CD8-positive, alpha-beta T cell (primary cell): ENCODE measurements at regions of chr6 and their contacts with region 1.

Region 1: DNA sequence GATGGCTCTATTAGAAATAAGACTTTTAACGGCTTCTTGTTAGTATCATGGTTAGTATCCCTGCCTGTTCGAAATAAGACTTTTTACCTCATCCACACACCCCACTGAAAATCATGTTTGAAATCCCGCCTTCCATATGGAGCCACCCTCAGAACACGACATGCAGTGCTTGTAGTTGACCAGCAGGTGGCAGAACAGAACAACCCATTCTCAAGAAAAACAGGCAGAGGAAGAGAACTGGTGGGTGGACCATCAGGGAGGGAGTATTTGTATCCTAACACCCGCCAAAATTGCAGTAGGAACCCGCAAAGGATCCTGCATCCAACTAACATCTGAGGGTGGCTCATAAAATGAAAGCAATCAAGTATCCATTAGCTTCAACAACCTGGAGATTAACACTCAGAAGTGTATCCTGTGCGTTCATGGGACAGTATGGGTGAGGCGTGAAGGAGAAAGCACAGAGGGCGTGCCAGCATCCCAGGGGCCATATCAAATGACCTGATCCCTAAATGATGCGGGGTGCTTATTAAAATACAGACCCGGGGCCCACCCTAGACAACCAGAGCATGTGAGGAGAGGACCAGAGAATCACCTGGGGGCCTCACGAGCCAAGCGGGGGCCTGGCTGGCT is 89.6 kb upstream of the NHSL1 start:
- DNase-seq: peak in 8 of 9 experiments; percentile 24 to 74 (median 50)
- ATAC-seq: peak; percentile 67
- H3K4me3 ChIP-seq: no peak overlapping the region
- H3K4me3 Mint-ChIP-seq: no peak overlapping the region
- H3K27ac ChIP-seq: no peak overlapping the region
- H3K27ac Mint-ChIP-seq: no peak overlapping the region
- H3K4me1 ChIP-seq: peaks cover 10% of the 10 kb centered on the region
- H3K4me1 Mint-ChIP-seq: peaks cover 19% of the 10 kb centered on the region
- H3K27me3 ChIP-seq: no peaks in the 10 kb centered on the region
- H3K27me3 Mint-ChIP-seq: no peaks in the 10 kb centered on the region
- CTCF ChIP-seq: peak; percentile 93

Region 2: GRCh38 chr6:138493413-138493812 is 95.5 kb before region 1 on chr6:
- CTCF ChIA-PET with region 1: no interaction called
- POLR2A ChIA-PET with region 1: no interaction called
- intact Hi-C with region 1: no loop called
- DNase-seq: no peak
- ATAC-seq: no peak
- H3K4me3 ChIP-seq: no peak overlapping the region
- H3K4me3 Mint-ChIP-seq: no peak overlapping the region
- H3K27ac ChIP-seq: no peak overlapping the region
- H3K27ac Mint-ChIP-seq: no peak overlapping the region
- H3K4me1 ChIP-seq: no peaks in the 10 kb centered on the region
- H3K4me1 Mint-ChIP-seq: no peaks in the 10 kb centered on the region
- H3K27me3 ChIP-seq: no peaks in the 10 kb centered on the region
- H3K27me3 Mint-ChIP-seq: peaks cover 7% of the 10 kb centered on the region
- CTCF ChIP-seq: no peak

Region 3: DNA sequence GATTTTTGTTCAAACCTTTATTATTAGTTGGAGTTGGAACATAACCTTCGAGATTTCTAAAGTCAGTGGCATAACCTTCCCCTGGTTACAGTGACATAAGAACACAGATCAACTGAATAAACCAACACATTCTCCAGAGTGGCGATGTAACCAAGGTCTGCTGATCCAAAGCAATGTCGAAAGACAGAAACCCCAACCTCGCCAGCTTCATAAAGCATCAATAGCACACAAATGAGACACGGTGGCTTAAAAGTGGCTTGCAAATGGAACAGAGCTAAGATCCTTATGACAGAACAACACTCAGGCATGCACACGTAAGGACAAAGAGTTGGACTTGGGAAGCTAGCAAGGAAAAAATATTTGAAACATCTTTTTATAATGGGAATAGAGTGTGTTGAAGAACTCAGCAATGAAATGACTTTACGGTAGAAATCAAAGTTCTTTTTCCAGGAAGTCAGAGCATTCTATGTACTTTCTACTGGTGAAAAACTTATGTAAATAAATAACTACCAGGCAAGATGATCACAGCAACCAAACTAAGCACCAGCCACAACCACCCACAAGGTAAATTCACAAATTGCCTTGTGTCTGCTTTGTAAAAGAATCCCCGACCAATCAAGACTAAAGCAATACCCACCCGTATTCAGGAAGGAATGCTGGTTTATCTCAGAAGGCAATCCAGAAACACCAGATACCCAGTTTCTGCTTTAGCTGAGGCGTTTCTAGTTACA is 28.6 kb before region 1 on chr6:
- CTCF ChIA-PET with region 1: no interaction called
- POLR2A ChIA-PET with region 1: no interaction called
- intact Hi-C with region 1: no loop called
- DNase-seq: no peak
- ATAC-seq: no peak
- H3K4me3 ChIP-seq: no peak overlapping the region
- H3K4me3 Mint-ChIP-seq: no peak overlapping the region
- H3K27ac ChIP-seq: no peak overlapping the region
- H3K27ac Mint-ChIP-seq: no peak overlapping the region
- H3K4me1 ChIP-seq: no peaks in the 10 kb centered on the region
- H3K4me1 Mint-ChIP-seq: no peaks in the 10 kb centered on the region
- H3K27me3 ChIP-seq: no peaks in the 10 kb centered on the region
- H3K27me3 Mint-ChIP-seq: peaks cover 25% of the 10 kb centered on the region
- CTCF ChIP-seq: no peak

Region 4: GRCh38 chr6:138600726-138601125 is 11.8 kb after region 1 on chr6:
- CTCF ChIA-PET with region 1: interaction called, 16 read pairs
- POLR2A ChIA-PET with region 1: no interaction called
- intact Hi-C with region 1: no loop called
- DNase-seq: no peak
- ATAC-seq: no peak
- H3K4me3 ChIP-seq: no peak overlapping the region
- H3K4me3 Mint-ChIP-seq: no peak overlapping the region
- H3K27ac ChIP-seq: no peak overlapping the region
- H3K27ac Mint-ChIP-seq: no peak overlapping the region
- H3K4me1 ChIP-seq: no peaks in the 10 kb centered on the region
- H3K4me1 Mint-ChIP-seq: no peaks in the 10 kb centered on the region
- H3K27me3 ChIP-seq: peaks cover 0 to 4% of the 10 kb centered on the region in 2 experiments
- H3K27me3 Mint-ChIP-seq: peaks cover 16% of the 10 kb centered on the region
- CTCF ChIP-seq: no peak

Region 5: GRCh38 chr6:138692058-138692977 is 103.4 kb after region 1 on chr6:
- CTCF ChIA-PET with region 1: no interaction called
- POLR2A ChIA-PET with region 1: no interaction called
- intact Hi-C with region 1: loop called in 1 of 2 experiments (anchors 2 kb)
- DNase-seq: peak; percentile 14 to 78 (median 48)
- ATAC-seq: peak; percentile 68
- H3K4me3 ChIP-seq: peak overlapping the region in 1 of 2 experiments; percentile 23
- H3K4me3 Mint-ChIP-seq: peak overlapping the region; percentile 81
- H3K27ac ChIP-seq: no peak overlapping the region
- H3K27ac Mint-ChIP-seq: no peak overlapping the region
- H3K4me1 ChIP-seq: peaks cover 5% of the 10 kb centered on the region
- H3K4me1 Mint-ChIP-seq: peaks cover 10% of the 10 kb centered on the region
- H3K27me3 ChIP-seq: peaks cover 0 to 6% of the 10 kb centered on the region in 2 experiments
- H3K27me3 Mint-ChIP-seq: peaks cover 30% of the 10 kb centered on the region
- CTCF ChIP-seq: peak; percentile 65

Region 6: DNA sequence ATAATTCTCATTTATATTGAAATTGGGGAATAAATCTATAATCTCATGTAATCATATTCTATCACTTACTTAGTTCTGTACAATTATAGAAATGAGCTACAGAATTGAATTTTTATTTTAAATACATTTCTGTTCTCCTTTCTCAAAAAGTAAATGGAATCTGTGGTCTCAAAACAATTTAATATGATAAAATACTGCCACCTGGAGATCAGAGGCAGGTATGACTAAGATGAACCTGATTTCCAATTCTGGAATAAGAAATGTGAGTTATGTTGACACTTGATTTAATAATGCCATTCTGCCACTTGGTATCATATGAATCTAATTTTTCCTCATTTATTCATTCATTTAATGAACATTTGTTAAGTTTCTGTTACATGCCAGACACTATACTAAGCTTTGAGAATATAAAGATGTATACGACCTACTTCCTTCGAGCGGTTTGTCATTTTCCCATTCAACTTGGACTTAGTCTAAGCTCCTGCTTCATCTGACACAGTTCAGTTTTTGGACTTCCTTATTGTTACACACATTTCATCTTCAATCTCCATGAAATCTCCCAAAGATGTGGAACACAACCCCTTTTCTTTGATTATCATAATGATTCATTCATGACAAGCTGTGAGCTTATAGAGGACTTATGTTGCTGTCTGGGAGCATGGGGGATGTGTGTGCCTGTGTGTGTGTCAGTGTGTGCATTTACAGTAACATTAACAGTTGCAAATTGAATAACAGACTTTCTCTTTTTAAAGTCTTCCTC is 177.2 kb after region 1 on chr6:
- CTCF ChIA-PET with region 1: interaction called, 68 read pairs
- POLR2A ChIA-PET with region 1: no interaction called
- intact Hi-C with region 1: loop called (anchors 1 kb)
- DNase-seq: peak in 2 of 9 experiments; percentile 34 to 52
- ATAC-seq: no peak
- H3K4me3 ChIP-seq: no peak overlapping the region
- H3K4me3 Mint-ChIP-seq: no peak overlapping the region
- H3K27ac ChIP-seq: no peak overlapping the region
- H3K27ac Mint-ChIP-seq: no peak overlapping the region
- H3K4me1 ChIP-seq: no peaks in the 10 kb centered on the region
- H3K4me1 Mint-ChIP-seq: no peaks in the 10 kb centered on the region
- H3K27me3 ChIP-seq: no peaks in the 10 kb centered on the region
- H3K27me3 Mint-ChIP-seq: no peaks in the 10 kb centered on the region
- CTCF ChIP-seq: peak; percentile 86

Region 7: GRCh38 chr6:138773177-138774091 is 184.5 kb after region 1 on chr6 and contains the start of gene CCDC28A:
- CTCF ChIA-PET with region 1: interaction called, 30 read pairs
- POLR2A ChIA-PET with region 1: interaction called, 3 read pairs
- intact Hi-C with region 1: no loop called
- DNase-seq: peak; percentile 87 to 97 (median 92)
- ATAC-seq: peak; percentile 84
- H3K4me3 ChIP-seq: peak within 1 kb of the TSS; percentile 68 to 90
- H3K4me3 Mint-ChIP-seq: peak within 1 kb of the TSS; percentile 100
- H3K27ac ChIP-seq: peak within 1 kb of the TSS; percentile 88 to 96
- H3K27ac Mint-ChIP-seq: peak within 1 kb of the TSS; percentile 100
- H3K4me1 ChIP-seq: peaks cover 19% of the 10 kb centered on the region
- H3K4me1 Mint-ChIP-seq: peaks cover 33% of the 10 kb centered on the region
- H3K27me3 ChIP-seq: no peaks in the 10 kb centered on the region
- H3K27me3 Mint-ChIP-seq: no peaks in the 10 kb centered on the region
- CTCF ChIP-seq: no peak
- total RNA-seq, gene CCDC28A: 38.2 to 39.4 TPM